GM13976 (cell line): ENCODE measurements at regions of chr11 and their contacts with region 1.

Region 1: GRCh38 chr11:6531267-6531752 is 34.2 kb downstream of the DNHD1 start:
- DNase-seq: peak; percentile 52
- CTCF ChIP-seq: peak; percentile 68

Region 2: DNA sequence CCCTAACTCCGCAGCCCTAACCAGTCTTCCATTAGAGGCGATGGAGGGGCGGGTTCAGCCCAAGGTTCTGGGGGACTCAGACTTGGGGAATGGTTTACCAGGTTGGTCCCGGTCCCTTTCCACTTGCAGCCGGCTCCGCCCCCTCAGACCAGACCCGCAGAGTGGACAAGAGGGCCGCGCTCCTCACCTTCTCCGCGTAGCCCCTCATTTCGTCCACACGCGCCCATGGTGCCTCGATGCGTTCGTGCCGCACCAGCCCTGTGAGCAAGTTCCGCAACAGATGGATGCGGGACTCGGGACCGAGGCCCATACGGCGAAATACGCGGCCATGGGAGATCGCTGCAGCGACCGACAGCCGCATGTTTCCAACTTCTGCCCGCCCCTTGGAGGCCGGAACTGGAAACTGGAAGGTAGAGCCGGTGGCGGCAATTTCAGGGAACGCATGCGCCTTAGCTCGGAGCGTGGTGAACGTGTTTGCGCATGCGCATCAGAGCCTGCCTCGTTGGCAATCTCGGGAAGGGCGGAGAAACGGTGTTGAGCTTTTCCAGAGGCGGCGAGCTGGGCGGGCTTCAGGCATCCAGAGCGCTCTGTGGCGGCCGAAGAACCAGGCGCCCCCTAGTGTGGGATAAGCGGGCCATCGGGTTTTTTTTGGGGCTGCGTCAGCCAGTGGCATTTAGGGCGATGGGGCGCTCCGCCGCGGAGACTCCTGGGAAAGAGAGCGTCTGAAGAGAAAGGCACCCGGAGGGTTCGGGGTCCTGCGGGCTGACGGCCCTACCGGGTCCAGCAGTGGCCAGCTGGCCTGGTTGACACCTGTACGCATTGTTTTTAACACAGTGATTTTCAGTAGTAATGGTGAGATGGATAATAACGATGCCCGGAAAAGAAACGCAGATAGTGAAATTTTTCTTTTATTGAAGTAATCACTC is 151.9 kb after region 1 on chr11 and contains the start of gene MRPL17:
- in situ Hi-C with region 1: loop called (anchors 10 kb)
- DNase-seq: peak; percentile 97
- CTCF ChIP-seq: peak; percentile 77